ENCODE measurements at regions of chr19 and their contacts with region 1.

Region 1: DNA sequence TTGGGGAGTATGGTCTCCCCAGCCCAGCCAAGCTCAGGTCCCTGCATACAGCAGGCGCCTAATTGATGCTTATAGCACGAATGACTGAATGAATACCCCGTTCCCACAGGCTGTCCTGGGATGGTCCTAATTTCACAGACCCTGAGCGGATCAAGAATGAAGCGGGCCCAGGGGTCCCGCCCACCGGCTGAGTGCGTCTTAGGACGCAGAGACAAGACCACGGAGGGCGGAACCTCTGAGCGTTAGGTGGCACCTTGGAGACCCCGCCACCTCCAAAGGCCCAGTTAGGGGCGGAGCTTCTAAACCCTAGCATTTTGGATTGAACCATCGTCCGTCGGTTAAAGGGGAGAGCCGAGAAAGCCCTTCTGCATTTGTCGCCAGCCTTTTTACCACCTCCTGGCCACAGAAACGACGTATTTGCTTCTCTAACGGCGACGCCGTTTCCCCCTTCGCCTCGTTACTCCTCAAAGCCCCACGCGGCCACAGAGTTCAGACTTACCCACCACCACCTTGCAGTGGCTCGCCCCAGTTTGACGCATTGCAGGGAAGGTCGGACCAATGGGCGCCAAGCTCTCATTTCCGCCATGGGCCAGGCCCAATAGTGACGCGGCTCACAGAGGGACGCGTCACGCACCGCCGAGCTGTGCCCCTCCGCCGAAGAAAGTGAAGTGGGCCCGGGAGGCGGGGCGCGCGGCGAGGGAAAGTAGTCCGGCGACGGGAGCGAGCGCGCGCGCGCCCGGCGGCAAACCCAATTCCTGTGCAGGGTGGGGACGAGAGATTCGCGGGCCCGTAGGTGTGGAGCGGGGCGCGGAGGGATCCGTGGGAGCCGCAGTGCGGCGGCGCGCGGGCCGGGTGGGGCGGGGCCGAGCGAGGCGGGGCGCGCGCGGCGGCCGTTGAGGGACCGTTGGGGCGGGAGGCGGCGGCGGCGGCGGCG is 479 bp upstream of the CALM3 start:
- DNase-seq: peak; percentile 99
- ATAC-seq: peak; percentile 86
- H3K4me3 Mint-ChIP-seq: peak overlapping the region; percentile 84
- H3K27ac Mint-ChIP-seq: peak overlapping the region; percentile 100
- H3K4me1 Mint-ChIP-seq: peaks cover 33% of the 10 kb centered on the region
- H3K27me3 Mint-ChIP-seq: no peaks in the 10 kb centered on the region

Region 2: DNA sequence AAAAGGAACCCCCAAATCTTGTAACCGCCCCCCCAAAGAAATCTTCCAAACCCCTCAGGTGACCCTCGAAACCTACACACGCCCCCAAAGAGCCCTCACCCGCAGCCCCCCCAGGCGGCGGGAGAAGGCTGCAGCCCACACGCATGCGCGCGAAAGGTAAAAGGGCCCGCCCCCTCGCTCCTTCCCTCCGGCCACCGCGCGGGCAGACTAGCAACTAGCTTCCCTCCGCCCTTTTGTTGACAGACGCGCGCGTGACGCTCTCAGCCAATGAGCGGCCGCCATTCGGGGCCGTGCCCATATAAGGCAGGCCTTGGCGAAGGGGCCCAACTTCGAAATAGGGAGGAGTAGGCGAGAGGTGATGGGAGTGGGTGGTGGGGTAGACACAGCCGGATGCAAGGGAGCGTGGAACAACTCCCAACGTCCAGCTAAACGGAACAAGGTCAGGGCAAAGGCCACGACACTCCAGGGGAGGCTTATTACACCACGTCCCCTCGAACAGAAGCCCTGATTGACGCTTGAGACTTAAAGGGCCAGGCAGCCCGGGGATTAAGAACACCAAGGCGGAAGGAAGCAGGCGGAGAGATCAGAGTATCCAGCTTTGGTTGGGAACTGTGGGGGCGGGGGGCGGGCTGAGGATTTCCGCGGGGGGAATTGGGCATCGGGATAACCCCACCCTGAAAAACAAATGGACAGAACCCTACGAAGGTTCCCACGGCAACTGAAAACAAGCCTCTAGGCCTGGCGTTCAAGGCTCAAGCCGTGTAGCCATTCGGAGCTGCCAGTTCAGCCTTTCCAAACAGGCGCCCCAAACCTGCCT is 883.3 kb before region 1 on chr19:
- CTCF ChIA-PET with region 1: no interaction called
- POLR2A ChIA-PET with region 1: no interaction called
- intact Hi-C with region 1: loop called in 1 of 2 experiments (anchors 5 kb)
- DNase-seq: peak; percentile 99
- ATAC-seq: peak; percentile 97
- H3K4me3 Mint-ChIP-seq: peak overlapping the region; percentile 93
- H3K27ac Mint-ChIP-seq: peak overlapping the region; percentile 94
- H3K4me1 Mint-ChIP-seq: peaks cover 40% of the 10 kb centered on the region
- H3K27me3 Mint-ChIP-seq: no peaks in the 10 kb centered on the region

Region 3: GRCh38 chr19:46328079-46328478 is 272.6 kb before region 1 on chr19:
- CTCF ChIA-PET with region 1: no interaction called
- POLR2A ChIA-PET with region 1: no interaction called
- intact Hi-C with region 1: no loop called
- DNase-seq: no peak
- ATAC-seq: no peak
- H3K4me3 Mint-ChIP-seq: no peak overlapping the region
- H3K27ac Mint-ChIP-seq: no peak overlapping the region
- H3K4me1 Mint-ChIP-seq: no peaks in the 10 kb centered on the region
- H3K27me3 Mint-ChIP-seq: peaks cover 6% of the 10 kb centered on the region

Region 4: DNA sequence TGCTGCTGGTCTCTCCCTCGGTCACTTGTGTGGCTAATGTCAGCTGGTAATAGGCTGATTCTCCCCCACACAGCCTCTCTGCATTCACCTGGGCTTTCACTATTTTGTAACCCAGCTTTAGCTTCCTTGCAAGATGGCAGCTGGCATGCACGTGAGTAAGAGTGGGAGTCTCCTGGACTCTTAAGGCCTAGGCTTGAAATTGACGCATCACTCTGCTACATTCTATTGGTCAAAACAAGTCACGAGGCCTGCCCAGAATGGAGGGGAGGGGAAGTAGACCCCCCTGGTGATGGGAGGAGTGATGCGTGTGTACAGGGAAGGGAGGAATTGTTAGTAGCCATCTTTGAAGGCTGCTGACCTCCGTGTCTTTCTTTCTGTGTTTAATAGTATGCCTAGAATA is 80.0 kb before region 1 on chr19:
- CTCF ChIA-PET with region 1: interaction called, 3 read pairs
- POLR2A ChIA-PET with region 1: interaction called, 3 read pairs
- intact Hi-C with region 1: loop called in 1 of 2 experiments (anchors 2 kb)
- DNase-seq: no peak
- ATAC-seq: no peak
- H3K4me3 Mint-ChIP-seq: no peak overlapping the region
- H3K27ac Mint-ChIP-seq: peak overlapping the region; percentile 47
- H3K4me1 Mint-ChIP-seq: peaks cover 57% of the 10 kb centered on the region
- H3K27me3 Mint-ChIP-seq: no peaks in the 10 kb centered on the region

Region 5: GRCh38 chr19:46634045-46634655 is 33.5 kb after region 1 on chr19:
- CTCF ChIA-PET with region 1: interaction called, 7 read pairs
- POLR2A ChIA-PET with region 1: interaction called, 4 read pairs
- intact Hi-C with region 1: loop called in 1 of 2 experiments (anchors 1 kb)
- DNase-seq: peak; percentile 99
- ATAC-seq: peak; percentile 63
- H3K4me3 Mint-ChIP-seq: peak overlapping the region; percentile 73
- H3K27ac Mint-ChIP-seq: peak overlapping the region; percentile 72
- H3K4me1 Mint-ChIP-seq: peaks cover 21% of the 10 kb centered on the region
- H3K27me3 Mint-ChIP-seq: no peaks in the 10 kb centered on the region

Region 6: GRCh38 chr19:46746281-46747013 is 145.8 kb after region 1 on chr19 and contains the start of gene STRN4:
- CTCF ChIA-PET with region 1: no interaction called
- POLR2A ChIA-PET with region 1: no interaction called
- intact Hi-C with region 1: loop called in 1 of 2 experiments (anchors 1 kb)
- DNase-seq: peak; percentile 73
- ATAC-seq: peak; percentile 68
- H3K4me3 Mint-ChIP-seq: peak within 1 kb of the TSS; percentile 89
- H3K27ac Mint-ChIP-seq: peak within 1 kb of the TSS; percentile 89
- H3K4me1 Mint-ChIP-seq: peaks cover 49% of the 10 kb centered on the region
- H3K27me3 Mint-ChIP-seq: no peaks in the 10 kb centered on the region
- total RNA-seq, gene STRN4: 56.4 to 56.8 TPM

Region 7: GRCh38 chr19:46860125-46860845 is 259.6 kb after region 1 on chr19:
- CTCF ChIA-PET with region 1: no interaction called
- POLR2A ChIA-PET with region 1: no interaction called
- intact Hi-C with region 1: loop called in 1 of 2 experiments (anchors 1 kb)
- DNase-seq: peak; percentile 99
- ATAC-seq: peak; percentile 82
- H3K4me3 Mint-ChIP-seq: no peak overlapping the region
- H3K27ac Mint-ChIP-seq: peak overlapping the region; percentile 78
- H3K4me1 Mint-ChIP-seq: peaks cover 25% of the 10 kb centered on the region
- H3K27me3 Mint-ChIP-seq: no peaks in the 10 kb centered on the region

Region 8: GRCh38 chr19:47370045-47370611 is 769.5 kb after region 1 on chr19:
- CTCF ChIA-PET with region 1: no interaction called
- POLR2A ChIA-PET with region 1: no interaction called
- intact Hi-C with region 1: no loop called
- DNase-seq: no peak
- ATAC-seq: no peak
- H3K4me3 Mint-ChIP-seq: no peak overlapping the region
- H3K27ac Mint-ChIP-seq: no peak overlapping the region
- H3K4me1 Mint-ChIP-seq: no peaks in the 10 kb centered on the region
- H3K27me3 Mint-ChIP-seq: no peaks in the 10 kb centered on the region

Measured in activated CD4-positive, alpha-beta T cell treated with anti-CD3 and anti-CD28 coated beads for 36 hours (primary cell).